Heart right ventricle (tissue), 16 donors: ENCODE measurements at regions of chr21 and their contacts with region 1.

Region 1: DNA sequence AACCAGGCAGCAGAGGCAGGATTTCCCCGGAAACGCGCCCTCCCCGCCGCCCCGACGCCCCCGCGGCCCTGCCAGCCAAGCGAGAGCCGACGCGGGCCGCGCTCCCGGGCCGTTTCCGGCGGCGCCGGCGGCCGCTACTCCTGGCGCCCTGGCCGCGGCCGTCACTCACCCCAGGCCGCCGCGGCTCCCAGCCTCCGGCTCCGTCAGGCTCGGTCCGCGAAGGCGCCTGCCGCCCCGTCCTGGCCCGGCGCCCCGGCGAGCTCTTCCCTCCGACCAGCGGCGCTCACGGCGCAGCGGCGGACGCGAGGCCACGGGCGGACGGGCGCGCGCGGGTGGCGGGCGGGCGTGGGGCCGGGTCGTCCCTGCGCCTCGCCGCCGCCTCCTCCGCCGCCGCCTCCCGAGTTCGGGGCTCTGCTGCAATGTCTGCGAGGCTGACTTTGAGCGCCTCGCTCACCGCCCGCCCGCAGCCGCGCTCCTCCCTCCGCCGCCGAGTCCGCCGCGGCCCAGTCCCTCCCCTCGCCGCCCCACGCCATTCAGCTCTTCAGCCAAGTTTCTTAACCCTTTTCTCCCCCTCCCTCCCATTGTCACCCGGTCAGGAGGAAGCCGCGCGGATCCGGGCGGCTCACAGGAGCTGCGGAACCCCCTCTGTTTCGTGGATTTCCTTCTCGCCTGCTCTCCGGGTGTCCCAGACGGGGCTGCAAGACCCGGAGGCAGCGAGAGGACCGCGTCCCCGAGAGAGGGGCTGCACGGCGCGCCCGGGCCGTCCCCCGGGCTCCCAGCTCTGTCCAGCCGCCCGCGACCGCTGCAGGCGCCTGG is at the start of gene NRIP1:
- DNase-seq: peak; percentile 93 to 94
- ATAC-seq: peak; percentile 92 to 98 (median 95)
- H3K4me3 ChIP-seq: peak within 1 kb of the TSS; percentile 83 to 96 (median 90)
- H3K27ac ChIP-seq: peak within 1 kb of the TSS; percentile 92 to 99 (median 97)
- H3K4me1 ChIP-seq: peaks cover 0 to 47% (median 38%) of the 10 kb centered on the region in 9 donors
- H3K27me3 ChIP-seq: no peaks in the 10 kb centered on the region
- CTCF ChIP-seq: no peak
- total RNA-seq, gene NRIP1: 13.6 to 40.3 (median 17.9) TPM

Region 2: DNA sequence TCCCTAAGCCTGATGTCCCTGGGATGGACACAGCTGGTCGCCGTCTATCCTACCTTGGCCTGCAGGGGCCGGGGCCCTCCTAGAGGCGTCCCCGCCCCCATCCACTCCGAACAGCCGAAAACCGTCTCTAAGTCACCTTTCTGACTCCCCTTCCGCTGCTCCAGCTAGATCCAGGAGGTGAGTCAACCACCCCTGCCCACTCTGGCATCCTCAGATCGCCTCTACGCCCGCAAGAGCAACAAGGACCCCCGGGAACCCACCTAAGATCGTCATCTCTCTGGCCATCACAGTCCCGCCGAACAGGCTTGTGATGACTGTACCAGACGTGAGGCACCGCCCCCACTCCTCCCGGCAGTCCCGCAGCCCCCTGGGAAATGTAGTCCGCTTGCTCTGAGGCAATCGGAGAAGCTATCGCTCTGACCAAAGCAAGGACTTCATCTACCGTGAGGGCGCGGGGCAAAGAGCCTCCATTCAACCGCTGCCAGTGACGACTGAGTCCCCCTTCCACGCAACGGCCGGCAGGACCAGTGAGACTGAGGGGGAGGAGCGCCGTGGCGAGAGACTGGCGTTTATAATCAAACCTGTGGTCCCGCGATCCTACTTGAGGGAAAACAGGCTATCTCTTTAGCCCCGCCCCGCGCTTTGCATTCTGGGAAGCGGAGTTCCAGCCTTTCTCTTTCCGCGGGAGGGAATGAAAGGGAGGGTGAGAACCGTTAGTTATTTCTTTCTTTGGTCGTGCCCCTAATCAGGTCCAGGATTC is 681.8 kb before region 1 on chr21 and contains the start of gene HSPA13:
- intact Hi-C with region 1: loop called in 1 of 10 experiments (anchors 10 kb)
- DNase-seq: peak; percentile 99 to 100
- ATAC-seq: peak; percentile 99 to 100 (median 100)
- H3K4me3 ChIP-seq: peak within 1 kb of the TSS; percentile 47 to 92 (median 80)
- H3K27ac ChIP-seq: peak within 1 kb of the TSS; percentile 5 to 94 (median 90)
- H3K4me1 ChIP-seq: peaks cover 0 to 38% (median 27%) of the 10 kb centered on the region in 9 donors
- H3K27me3 ChIP-seq: no peaks in the 10 kb centered on the region
- CTCF ChIP-seq: no peak
- total RNA-seq, gene HSPA13: 10.6 to 24.0 (median 15.9) TPM

Region 3: DNA sequence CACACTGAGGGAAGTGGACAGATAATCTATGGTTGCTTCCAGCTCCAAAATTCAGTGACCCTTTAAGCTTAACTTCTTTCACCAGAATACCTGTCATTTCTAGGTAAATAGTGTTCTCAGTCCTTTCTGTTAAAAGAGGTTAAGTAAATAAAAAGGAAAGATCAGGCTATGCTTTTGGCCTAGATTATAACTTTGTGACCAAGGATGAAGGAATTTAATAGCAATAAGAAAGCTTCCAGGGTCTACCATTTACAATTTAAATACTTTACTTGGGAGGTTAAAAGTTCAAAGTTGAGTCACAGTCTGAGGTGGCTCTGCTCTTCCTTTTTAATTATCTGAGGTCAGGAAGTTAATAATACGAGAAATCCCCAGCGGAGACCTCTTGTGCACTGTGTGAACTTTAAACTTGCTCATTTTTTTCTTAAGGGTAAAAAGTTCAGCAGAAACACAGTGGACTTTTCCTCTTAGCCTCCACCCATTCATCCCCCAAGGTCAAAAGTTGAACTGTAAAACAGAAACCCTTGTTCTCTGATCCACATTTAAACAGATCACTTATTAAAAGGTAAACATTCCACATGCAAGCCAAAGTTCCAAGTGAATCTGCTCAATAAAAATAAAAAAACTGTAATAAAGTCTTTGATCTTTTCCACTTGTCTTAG is 187.1 kb before region 1 on chr21:
- intact Hi-C with region 1: loop called in 3 of 10 experiments (anchors 5 kb)
- DNase-seq: no peak
- ATAC-seq: peak in 6 of 8 donors; percentile 62 to 89 (median 74)
- H3K4me3 ChIP-seq: no peak overlapping the region
- H3K27ac ChIP-seq: peak overlapping the region in 1 of 10 donors; percentile 27
- H3K4me1 ChIP-seq: peaks cover 0 to 46% (median 14%) of the 10 kb centered on the region in 9 donors
- H3K27me3 ChIP-seq: no peaks in the 10 kb centered on the region
- CTCF ChIP-seq: no peak

Region 4: GRCh38 chr21:14977814-14978213 is 87.0 kb before region 1 on chr21:
- intact Hi-C with region 1: loop called in 1 of 10 experiments (anchors 5 kb)
- DNase-seq: no peak
- ATAC-seq: no peak
- H3K4me3 ChIP-seq: no peak overlapping the region
- H3K27ac ChIP-seq: no peak overlapping the region
- H3K4me1 ChIP-seq: peaks cover 0 to 30% (median 9%) of the 10 kb centered on the region in 9 donors
- H3K27me3 ChIP-seq: no peaks in the 10 kb centered on the region
- CTCF ChIP-seq: no peak

Region 5: GRCh38 chr21:15221799-15222386 is 157.1 kb after region 1 on chr21:
- intact Hi-C with region 1: loop called in 2 of 10 experiments (anchors 5 to 10 kb)
- DNase-seq: peak; percentile 15 to 68
- ATAC-seq: peak; percentile 90 to 100 (median 96)
- H3K4me3 ChIP-seq: no peak overlapping the region
- H3K27ac ChIP-seq: peak overlapping the region in 5 of 10 donors; percentile 9 to 65 (median 27)
- H3K4me1 ChIP-seq: peaks cover 0 to 36% (median 17%) of the 10 kb centered on the region in 9 donors
- H3K27me3 ChIP-seq: no peaks in the 10 kb centered on the region
- CTCF ChIP-seq: peak in 1 of 9 donors; percentile 5

Region 6: GRCh38 chr21:15483138-15483780 is 418.5 kb after region 1 on chr21:
- intact Hi-C with region 1: loop called in 9 of 10 experiments (anchors 2 to 10 kb)
- DNase-seq: peak; percentile 81 to 89
- ATAC-seq: peak; percentile 93 to 100 (median 98)
- H3K4me3 ChIP-seq: no peak overlapping the region
- H3K27ac ChIP-seq: no peak overlapping the region
- H3K4me1 ChIP-seq: no peaks in the 10 kb centered on the region
- H3K27me3 ChIP-seq: no peaks in the 10 kb centered on the region
- CTCF ChIP-seq: peak; percentile 84 to 97 (median 93)